ENCODE measurements at regions of chr17 and their contacts with region 1.

Region 1: GRCh38 chr17:29293890-29294579 is at the start of gene NUFIP2:
- DNase-seq: peak; percentile 99
- ATAC-seq: peak; percentile 94 to 98 (median 97)
- H3K4me3 ChIP-seq: peak within 1 kb of the TSS; percentile 73 to 99 (median 95)
- H3K27ac ChIP-seq: peak within 1 kb of the TSS; percentile 90 to 100 (median 99)
- H3K4me1 ChIP-seq: peaks cover 15 to 42% (median 35%) of the 10 kb centered on the region in 9 donors
- H3K27me3 ChIP-seq: no peaks in the 10 kb centered on the region
- CTCF ChIP-seq: peak in 3 of 9 donors; percentile 27 to 45 (median 28)
- total RNA-seq, gene NUFIP2: 32.1 to 58.3 (median 39.6) TPM

Region 2: GRCh38 chr17:29246628-29247027 is 47.4 kb before region 1 on chr17 and contains the start of gene CRYBA1:
- intact Hi-C with region 1: loop called in 1 of 10 experiments (anchors 5 kb)
- DNase-seq: no peak
- ATAC-seq: peak in 3 of 8 donors; percentile 8 to 23 (median 19)
- H3K4me3 ChIP-seq: no peak within 1 kb of the TSS
- H3K27ac ChIP-seq: no peak within 1 kb of the TSS
- H3K4me1 ChIP-seq: peaks cover 0 to 4% (median 0%) of the 10 kb centered on the region in 9 donors
- H3K27me3 ChIP-seq: no peaks in the 10 kb centered on the region
- CTCF ChIP-seq: no peak
- total RNA-seq, gene CRYBA1: not detected

Region 3: DNA sequence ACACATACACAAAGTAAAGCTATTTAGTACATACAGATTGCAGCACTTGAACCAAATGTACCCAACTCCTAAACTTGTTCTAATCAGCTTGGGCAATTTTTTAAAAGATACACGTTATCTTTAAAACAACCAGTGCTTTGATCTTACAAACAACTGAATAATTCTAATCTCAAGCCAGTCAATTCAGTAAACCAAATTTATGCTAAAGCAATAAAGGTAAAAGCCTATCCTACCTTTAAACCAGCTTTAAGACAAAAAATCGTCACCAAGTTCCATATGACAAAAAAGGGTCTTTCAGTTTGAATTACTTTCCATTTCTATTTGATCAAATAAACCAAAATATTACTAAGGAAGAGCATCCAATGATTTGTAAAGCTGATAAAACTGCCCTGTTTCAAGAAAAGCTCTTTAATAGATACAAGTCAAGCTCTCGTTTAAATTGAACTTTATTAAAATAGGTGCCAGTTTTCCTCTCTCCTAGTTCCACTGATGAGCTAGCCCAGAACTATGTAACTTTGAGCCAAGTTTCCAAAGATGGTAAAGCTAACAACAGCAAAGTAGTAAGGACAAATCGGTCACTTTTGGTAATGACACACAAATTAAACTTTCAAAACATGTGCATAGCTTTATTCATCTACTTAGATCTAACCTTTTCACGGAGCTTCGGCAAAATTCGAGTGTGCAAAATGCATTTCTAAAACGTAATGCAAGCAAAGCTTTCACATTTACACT is 37.1 kb before region 1 on chr17:
- intact Hi-C with region 1: loop called in 1 of 10 experiments (anchors 5 kb)
- DNase-seq: no peak
- ATAC-seq: peak in 6 of 8 donors; percentile 28 to 76 (median 65)
- H3K4me3 ChIP-seq: peak overlapping the region in 3 of 10 donors; percentile 5 to 9 (median 7)
- H3K27ac ChIP-seq: peak overlapping the region in 8 of 10 donors; percentile 29 to 68 (median 46)
- H3K4me1 ChIP-seq: peaks cover 5 to 57% (median 39%) of the 10 kb centered on the region in 9 donors
- H3K27me3 ChIP-seq: no peaks in the 10 kb centered on the region
- CTCF ChIP-seq: no peak

Region 4: GRCh38 chr17:29357821-29358232 is 63.8 kb after region 1 on chr17:
- intact Hi-C with region 1: no loop called
- DNase-seq: no peak
- ATAC-seq: no peak
- H3K4me3 ChIP-seq: no peak overlapping the region
- H3K27ac ChIP-seq: peak overlapping the region in 2 of 10 donors; percentile 0 to 26
- H3K4me1 ChIP-seq: peaks cover 0 to 12% (median 0%) of the 10 kb centered on the region in 9 donors
- H3K27me3 ChIP-seq: no peaks in the 10 kb centered on the region
- CTCF ChIP-seq: no peak